ENCODE measurements at regions of chr15 and their contacts with region 1.

Region 1: DNA sequence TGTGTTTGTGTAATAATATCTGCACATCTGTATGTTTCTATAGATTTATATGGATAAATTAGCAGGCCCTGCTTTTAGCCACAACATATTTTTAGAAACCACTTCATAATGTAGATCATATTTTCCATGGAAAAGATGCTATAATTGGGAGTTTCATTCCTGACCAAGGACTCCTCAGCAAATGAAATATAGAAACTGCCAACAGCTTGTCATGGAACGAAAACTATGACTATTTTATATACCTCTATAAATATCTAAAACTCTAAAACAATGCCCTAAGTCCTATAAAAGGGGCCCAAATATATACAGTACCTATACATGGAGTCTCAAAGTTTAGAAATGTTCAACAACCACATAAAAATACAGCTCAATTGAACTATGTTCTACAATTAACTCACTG is 27.9 kb downstream of the EID1 start:
- DNase-seq: no peak
- H3K4me3 Mint-ChIP-seq: no peak overlapping the region
- H3K27ac Mint-ChIP-seq: peak overlapping the region; percentile 74
- H3K4me1 Mint-ChIP-seq: peaks cover 29% of the 10 kb centered on the region
- H3K27me3 Mint-ChIP-seq: peaks cover 2% of the 10 kb centered on the region

Region 2: DNA sequence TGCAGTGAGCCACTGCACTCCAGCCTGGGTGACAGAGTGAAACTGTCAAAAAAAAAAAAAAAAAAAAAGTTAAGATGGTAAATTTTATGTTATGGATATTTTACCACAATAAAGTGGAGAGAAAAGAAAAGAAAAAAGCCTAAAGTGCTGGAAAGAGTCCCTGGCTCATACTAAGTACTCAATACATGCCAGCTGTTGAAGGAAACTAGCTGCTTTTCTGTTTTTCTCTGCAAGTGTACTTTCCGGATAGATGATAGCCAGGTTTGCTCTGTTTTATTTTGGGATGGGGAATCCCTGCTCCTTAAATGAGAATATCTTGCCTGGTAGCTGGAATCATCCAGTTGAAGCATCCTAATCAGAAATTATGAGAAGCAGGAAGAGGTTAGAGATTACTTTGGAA is 17.0 kb before region 1 on chr15:
- intact Hi-C with region 1: loop called (anchors 2 kb)
- DNase-seq: no peak
- H3K4me3 Mint-ChIP-seq: no peak overlapping the region
- H3K27ac Mint-ChIP-seq: no peak overlapping the region
- H3K4me1 Mint-ChIP-seq: peaks cover 30% of the 10 kb centered on the region
- H3K27me3 Mint-ChIP-seq: peaks cover 4% of the 10 kb centered on the region

Measured in activated T-helper 1 cell treated with anti-CD3 and anti-CD28 coated beads, Interleukin-12 subunit alpha, Interleukin-12 subunit beta, Interleukin-2, Interleukin-4 antibody, amounts not matched to agents 30 ng/mL and 10 ng/mL and 1 ng/mL, durations not matched to agents 14 hours and 24 hours and 36 hours (primary cell).